GM10248 (cell line): ENCODE measurements at regions of chr7 and their contacts with region 1.

Region 1: DNA sequence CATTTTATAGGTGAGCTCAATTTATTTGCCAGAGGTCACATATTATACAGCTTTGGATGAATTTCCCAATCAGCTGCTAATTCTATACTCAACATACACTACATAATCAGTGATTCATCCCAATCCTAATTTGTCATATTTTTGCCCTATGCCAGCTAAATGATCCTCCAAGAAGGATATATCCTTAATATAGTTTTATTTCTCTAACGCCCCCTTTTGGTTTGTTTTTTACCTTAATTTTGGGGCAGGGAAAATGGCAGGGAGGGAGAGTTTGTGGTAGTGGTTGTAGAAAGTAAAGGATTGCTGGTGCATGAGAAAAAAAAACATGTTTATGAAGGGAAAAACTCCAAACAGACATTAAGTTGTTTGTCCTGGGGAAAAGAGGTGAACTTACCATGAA is 31.9 kb downstream of the WASL start:
- DNase-seq: no peak
- CTCF ChIP-seq: no peak

Region 2: DNA sequence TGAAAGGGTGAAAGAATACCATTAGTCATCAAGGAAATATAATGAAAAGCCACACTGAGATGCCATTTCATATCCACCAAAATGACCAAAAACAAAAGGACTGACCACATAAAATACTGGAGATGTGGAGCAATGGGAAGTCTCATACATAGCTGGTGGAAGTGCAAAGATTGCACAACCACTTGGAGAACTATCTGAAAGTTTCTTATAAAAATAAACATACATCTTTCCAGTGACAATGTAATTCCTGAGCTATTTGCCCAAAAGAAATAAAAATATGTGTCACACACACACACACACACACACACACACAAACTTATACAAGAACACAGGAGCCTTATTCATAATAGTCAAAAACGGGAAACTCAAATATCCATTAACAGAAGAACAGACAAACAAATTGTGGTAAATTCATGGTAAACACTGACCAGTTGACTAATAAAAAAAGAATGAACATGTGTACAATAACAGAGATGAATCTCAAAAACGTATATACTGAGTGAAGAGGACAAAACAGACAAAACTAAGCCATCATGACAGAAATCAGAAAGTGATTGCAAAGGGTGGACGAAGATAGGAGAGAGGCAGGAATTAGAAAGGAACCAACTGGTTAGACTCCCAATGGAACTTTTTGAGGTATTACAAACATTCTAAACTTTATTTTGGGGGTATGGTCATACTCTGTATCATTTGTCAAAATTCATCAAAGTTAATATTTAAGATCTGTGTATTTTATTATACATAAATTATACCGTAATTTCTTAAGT is 10.4 kb after region 1 on chr7:
- CTCF ChIA-PET with region 1: interaction called, 12 read pairs
- POLR2A ChIA-PET with region 1: no interaction called
- DNase-seq: no peak
- CTCF ChIP-seq: no peak